ENCODE measurements at regions of chr5 and their contacts with region 1.

Region 1: DNA sequence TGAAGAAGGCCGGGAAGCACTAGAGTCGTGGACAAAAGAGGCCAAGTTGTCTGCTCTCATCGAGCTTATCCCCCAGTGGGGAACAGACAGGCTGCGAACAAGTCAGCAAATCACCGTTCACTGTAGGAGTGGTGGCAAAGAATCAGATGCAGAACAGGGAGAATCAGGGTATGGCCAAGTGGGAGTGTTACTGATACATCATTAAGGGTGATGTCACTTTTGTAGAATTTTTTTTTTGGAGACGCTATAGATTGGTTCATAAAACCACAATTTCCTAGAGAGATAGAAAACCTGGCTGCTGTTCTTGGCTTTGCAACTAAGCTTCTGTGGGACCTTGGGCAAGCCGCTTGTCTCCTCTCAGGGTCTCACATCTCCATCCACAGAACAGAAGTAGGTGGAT is 21.3 kb downstream of the SPRY4 start:
- DNase-seq: no peak
- H3K4me3 ChIP-seq: no peak overlapping the region
- H3K27ac ChIP-seq: no peak overlapping the region
- H3K4me1 ChIP-seq: peaks cover 0 to 7% (median 2%) of the 10 kb centered on the region in 4 experiments; a peak in 4 of 7 replicates
- H3K27me3 ChIP-seq: no peaks in the 10 kb centered on the region
- CTCF ChIP-seq: no peak
- EP300 ChIP-seq: no peak
- POLR2A ChIP-seq: no peak
- RAD21 ChIP-seq: no peak

Region 2: GRCh38 chr5:142316051-142316450 is 12.5 kb after region 1 on chr5:
- CTCF ChIA-PET with region 1: interaction called, 3 read pairs
- POLR2A ChIA-PET with region 1: interaction called, 61 read pairs
- DNase-seq: no peak
- H3K4me3 ChIP-seq: no peak overlapping the region
- H3K27ac ChIP-seq: no peak overlapping the region
- H3K4me1 ChIP-seq: peaks cover 13 to 43% (median 20%) of the 10 kb centered on the region in 4 experiments
- H3K27me3 ChIP-seq: no peaks in the 10 kb centered on the region
- CTCF ChIP-seq: no peak
- EP300 ChIP-seq: no peak
- POLR2A ChIP-seq: no peak
- RAD21 ChIP-seq: no peak

Measured in H1 (cell line).